ENCODE measurements at regions of chr6 and their contacts with region 1.

Region 1: GRCh38 chr6:32177788-32178546 is at the start of gene RNF5:
- H3K4me3 ChIP-seq: peak within 1 kb of the TSS; percentile 68
- H3K27ac ChIP-seq: peak within 1 kb of the TSS; percentile 80
- H3K4me1 ChIP-seq: peaks cover 14% of the 10 kb centered on the region
- CTCF ChIP-seq: no peak

Region 2: GRCh38 chr6:32087574-32088486 is 90.1 kb before region 1 on chr6:
- CTCF ChIA-PET with region 1: no interaction called
- POLR2A ChIA-PET with region 1: no interaction called
- H3K4me3 ChIP-seq: no peak overlapping the region
- H3K27ac ChIP-seq: no peak overlapping the region
- H3K4me1 ChIP-seq: peaks cover 2% of the 10 kb centered on the region
- CTCF ChIP-seq: no peak

Region 3: GRCh38 chr6:32190054-32190851 is 12.3 kb after region 1 on chr6 and contains the start of gene PBX2:
- CTCF ChIA-PET with region 1: interaction called, 9 read pairs
- POLR2A ChIA-PET with region 1: interaction called, 25 read pairs
- H3K4me3 ChIP-seq: peak within 1 kb of the TSS; percentile 62
- H3K27ac ChIP-seq: peak within 1 kb of the TSS; percentile 77
- H3K4me1 ChIP-seq: peaks cover 10% of the 10 kb centered on the region
- CTCF ChIP-seq: no peak; the same call in 1 of the 2 replicates

Region 4: DNA sequence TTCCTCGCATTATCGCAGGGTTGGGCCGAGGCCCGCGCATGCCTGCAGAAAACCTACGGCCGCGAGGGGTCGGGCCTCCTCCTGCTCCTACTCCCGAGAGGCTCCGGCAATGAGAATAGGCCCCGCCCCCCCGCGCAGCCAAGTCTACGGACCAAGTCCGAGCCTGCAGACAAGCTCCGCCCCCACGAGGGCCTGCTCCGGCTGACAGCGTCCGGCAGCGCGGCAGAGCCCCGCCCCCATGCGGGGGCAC is 17.6 kb after region 1 on chr6:
- CTCF ChIA-PET with region 1: interaction called, 9 read pairs
- POLR2A ChIA-PET with region 1: interaction called, 25 read pairs
- H3K4me3 ChIP-seq: peak overlapping the region; percentile 72
- H3K27ac ChIP-seq: peak overlapping the region; percentile 97
- H3K4me1 ChIP-seq: peaks cover 4% of the 10 kb centered on the region
- CTCF ChIP-seq: peak; percentile 85

Measured in HEK293 (cell line).